Endothelial cell of umbilical vein (primary cell): ENCODE measurements at regions of chr1 and their contacts with region 1.

Region 1: DNA sequence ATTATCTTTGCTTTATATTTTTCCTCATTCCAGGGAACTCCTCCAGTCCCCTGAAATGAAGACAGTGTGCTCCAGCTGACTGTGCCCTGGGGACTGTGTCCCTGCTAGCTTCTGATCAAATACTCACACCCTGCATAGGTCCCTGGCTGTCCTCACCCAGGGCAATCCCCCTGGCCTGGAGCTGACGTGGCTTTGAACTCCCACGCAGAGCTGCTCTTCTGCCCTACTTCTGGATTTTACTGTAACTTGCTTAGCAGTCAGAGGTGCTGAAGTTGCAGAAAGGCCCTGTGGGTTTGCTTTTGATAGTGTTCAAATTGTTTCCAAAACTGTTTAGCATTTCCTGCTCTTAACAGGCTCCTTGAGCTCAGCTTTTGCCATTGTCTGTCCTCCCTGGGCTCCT is 186.5 kb downstream of the FASLG start:
- DNase-seq: no peak
- H3K4me3 ChIP-seq: no peak overlapping the region
- H3K27ac ChIP-seq: no peak overlapping the region
- H3K4me1 ChIP-seq: peaks cover 3% of the 10 kb centered on the region
- H3K27me3 ChIP-seq: no peaks in the 10 kb centered on the region
- CTCF ChIP-seq: no peak
- POLR2A ChIP-seq: no peak

Region 2: DNA sequence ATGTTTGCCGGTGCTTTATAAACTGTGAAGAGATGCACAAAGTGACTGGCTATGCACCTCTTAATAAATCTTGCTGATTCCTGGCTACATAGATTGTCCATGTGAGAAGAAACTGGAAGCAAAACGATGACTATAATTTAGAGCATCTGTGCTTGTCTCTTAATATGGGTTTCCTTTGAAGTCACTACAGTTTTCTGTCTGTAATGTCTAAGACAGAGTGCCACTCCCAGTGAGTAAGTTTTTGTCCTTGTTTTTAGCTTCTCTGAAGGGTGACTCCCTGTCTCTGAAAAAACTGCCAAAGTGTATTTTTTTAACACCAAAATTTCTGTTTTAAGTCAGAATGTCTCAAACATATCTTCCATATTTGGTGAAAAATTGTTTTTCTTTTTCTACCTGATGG is 11.4 kb before region 1 on chr1:
- CTCF ChIA-PET with region 1: interaction called, 13 read pairs
- POLR2A ChIA-PET with region 1: no interaction called
- dilution Hi-C with region 1: no loop called
- intact Hi-C with region 1: no loop called
- DNase-seq: no peak
- H3K4me3 ChIP-seq: no peak overlapping the region
- H3K27ac ChIP-seq: no peak overlapping the region
- H3K4me1 ChIP-seq: no peaks in the 10 kb centered on the region
- H3K27me3 ChIP-seq: no peaks in the 10 kb centered on the region
- CTCF ChIP-seq: no peak
- POLR2A ChIP-seq: no peak